Activated naive CD4-positive, alpha-beta T cell treated with anti-CD3 and anti-CD28 coated beads for 36 hours (primary cell): ENCODE measurements at regions of chr11 and their contacts with region 1.

Region 1: GRCh38 chr11:115334932-115335788 is 169.1 kb downstream of the CADM1 start:
- DNase-seq: no peak
- H3K4me3 Mint-ChIP-seq: no peak overlapping the region
- H3K27ac Mint-ChIP-seq: no peak overlapping the region
- H3K4me1 Mint-ChIP-seq: no peaks in the 10 kb centered on the region
- H3K27me3 Mint-ChIP-seq: peaks cover 7% of the 10 kb centered on the region

Region 2: DNA sequence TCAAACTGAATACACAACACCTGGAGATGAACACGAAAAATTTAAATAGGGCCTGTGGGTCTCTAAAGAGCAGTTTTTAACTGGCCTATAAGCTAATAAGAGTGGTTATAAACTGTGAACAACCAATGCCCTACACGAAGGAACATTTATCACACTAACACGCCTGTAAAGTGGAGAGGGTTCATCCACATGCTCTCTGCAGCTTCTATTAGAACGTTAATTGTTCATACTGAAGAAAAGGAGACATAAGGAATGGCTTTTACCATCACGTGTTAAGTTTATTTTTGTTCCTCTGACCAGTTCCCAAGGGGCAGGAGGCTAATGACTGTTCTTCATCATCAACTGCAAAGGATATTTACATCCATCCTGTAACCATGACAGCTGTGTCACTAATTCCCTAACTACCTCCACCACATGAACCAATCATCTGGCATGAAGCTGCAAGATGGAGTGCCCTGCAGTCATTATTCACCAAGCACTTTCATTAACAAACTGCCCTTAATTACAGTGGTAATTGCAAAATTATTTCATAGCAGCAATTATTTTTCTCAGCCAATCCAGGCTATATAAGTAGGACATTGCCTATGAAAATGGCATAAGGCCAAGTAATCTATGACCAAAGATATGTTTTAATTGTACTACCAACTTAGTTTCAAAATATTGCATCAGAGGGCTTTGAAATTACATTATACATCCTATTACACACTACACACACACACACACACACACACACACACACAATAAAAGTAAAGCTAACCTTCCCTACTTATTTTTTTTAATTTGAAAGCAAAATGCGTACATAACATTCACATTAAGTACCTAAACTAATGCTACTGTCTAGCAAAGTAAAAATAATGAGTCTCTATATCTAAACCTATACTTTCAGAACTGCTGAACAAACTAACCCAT is 17.6 kb before region 1 on chr11:
- CTCF ChIA-PET with region 1: no interaction called
- intact Hi-C with region 1: no loop called
- DNase-seq: no peak
- H3K4me3 Mint-ChIP-seq: no peak overlapping the region
- H3K27ac Mint-ChIP-seq: no peak overlapping the region
- H3K4me1 Mint-ChIP-seq: no peaks in the 10 kb centered on the region
- H3K27me3 Mint-ChIP-seq: peaks cover 12% of the 10 kb centered on the region

Region 3: DNA sequence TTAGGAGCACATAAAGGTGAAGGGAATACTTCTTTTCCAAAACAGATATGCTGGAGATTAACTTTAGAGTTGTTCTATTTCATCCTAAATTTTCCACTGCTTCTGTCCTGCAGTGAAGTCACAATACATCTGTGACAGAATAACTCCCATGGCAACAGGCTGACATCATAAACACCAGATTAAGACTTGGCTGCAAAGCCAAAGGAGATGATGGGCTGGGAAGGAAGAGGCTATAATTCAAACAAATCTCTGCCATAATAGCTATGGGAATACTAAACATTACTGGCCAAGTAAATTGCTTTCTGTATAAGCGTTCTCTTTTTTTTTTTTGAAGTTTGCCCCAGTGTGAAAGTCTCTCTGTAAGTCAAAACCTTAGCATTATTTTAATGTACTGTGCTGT is 61.4 kb after region 1 on chr11:
- CTCF ChIA-PET with region 1: no interaction called
- intact Hi-C with region 1: no loop called
- DNase-seq: no peak
- H3K4me3 Mint-ChIP-seq: no peak overlapping the region
- H3K27ac Mint-ChIP-seq: no peak overlapping the region
- H3K4me1 Mint-ChIP-seq: no peaks in the 10 kb centered on the region
- H3K27me3 Mint-ChIP-seq: no peaks in the 10 kb centered on the region

Region 4: DNA sequence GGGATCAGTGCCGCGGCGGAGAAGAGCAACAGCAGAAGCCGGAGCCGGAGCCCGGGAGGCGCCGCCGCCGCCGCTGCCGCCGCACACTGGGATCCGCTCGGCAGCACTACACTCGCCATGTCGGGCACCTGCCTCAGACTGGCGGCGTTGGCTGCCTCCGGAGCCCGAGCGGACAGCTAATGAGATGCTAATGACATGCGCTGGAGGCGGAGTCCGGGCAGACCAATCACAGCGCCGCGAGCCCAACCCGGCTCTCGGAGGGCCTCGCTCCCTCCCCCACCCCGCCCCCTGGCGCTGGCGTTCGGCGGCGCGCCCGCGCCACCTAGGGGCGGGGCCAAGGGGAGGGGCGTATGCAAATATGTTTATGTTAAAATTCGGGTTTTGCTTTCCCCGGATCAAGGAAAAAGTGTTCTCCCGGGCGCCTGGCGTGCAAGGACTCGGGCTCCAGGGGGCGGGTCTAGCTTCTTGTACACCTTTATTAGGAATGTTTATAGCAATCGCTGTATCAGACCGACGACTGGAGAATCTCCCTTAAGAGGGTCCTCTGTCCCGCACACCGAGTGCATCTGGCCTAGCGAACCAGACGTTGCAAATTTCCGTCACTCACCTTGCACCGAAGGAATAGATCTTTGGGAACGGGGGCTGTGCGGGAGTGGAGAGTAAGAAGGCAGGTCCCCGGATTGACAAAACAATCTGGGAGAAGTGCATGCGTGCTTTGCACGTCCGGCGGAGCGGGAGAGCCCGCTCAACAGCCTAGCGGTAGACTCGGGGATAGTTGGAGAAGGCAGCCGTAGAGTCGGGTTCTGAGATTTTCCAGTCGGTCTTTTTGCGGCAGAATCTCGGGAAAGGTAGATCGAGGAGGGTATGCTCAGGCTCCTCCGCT is 169.4 kb after region 1 on chr11 and contains the start of gene CADM1:
- CTCF ChIA-PET with region 1: no interaction called
- intact Hi-C with region 1: loop called (anchors 5 kb)
- DNase-seq: peak; percentile 76
- H3K4me3 Mint-ChIP-seq: peak within 1 kb of the TSS; percentile 62
- H3K27ac Mint-ChIP-seq: no peak within 1 kb of the TSS
- H3K4me1 Mint-ChIP-seq: peaks cover 11% of the 10 kb centered on the region
- H3K27me3 Mint-ChIP-seq: peaks cover 32% of the 10 kb centered on the region
- total RNA-seq, gene CADM1: 0.24 TPM in 1 of 2 experiments, not detected in the other

Region 5: DNA sequence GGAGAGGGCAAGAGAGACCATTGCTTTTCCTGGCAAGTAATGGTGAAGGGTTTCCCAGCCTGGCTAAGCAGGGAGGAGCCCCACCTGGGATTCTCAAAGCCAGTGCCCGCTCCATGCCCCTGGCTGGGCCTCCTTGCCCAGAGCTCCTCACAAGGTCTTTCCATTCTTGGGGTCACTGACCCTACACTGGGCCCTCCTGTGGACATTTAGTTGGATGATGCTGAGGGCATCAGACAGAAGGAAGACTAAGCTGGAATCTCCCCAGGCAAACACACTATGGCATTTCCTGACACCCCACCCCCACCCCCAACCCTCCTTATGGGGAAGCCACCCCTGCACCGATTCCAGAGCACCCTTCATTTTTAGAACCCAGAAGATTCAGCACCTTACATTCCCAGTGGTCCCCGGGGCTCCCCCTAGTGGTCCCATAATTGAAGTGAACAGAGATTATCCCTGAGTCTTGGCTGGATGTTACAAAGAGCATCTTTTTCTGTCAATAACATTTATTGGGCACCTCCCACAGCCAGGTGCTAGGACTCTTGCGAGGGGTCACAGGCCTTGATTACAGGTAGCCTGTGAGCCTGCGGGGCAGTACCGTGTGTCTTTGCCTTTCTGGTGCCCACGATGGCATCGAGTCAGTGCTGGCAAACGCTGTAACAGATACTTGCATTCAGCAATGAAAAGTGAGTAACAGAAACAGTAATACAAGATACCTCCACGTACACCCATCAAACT is 889.2 kb after region 1 on chr11:
- CTCF ChIA-PET with region 1: no interaction called
- intact Hi-C with region 1: loop called (anchors 5 kb)
- DNase-seq: peak; percentile 59
- H3K4me3 Mint-ChIP-seq: no peak overlapping the region
- H3K27ac Mint-ChIP-seq: no peak overlapping the region
- H3K4me1 Mint-ChIP-seq: no peaks in the 10 kb centered on the region
- H3K27me3 Mint-ChIP-seq: no peaks in the 10 kb centered on the region